Ascending aorta (tissue), 2 donors: ENCODE measurements at regions of chr11 and their contacts with region 1.

Region 1: GRCh38 chr11:65506770-65507505 is 8.1 kb downstream of the MALAT1 start:
- DNase-seq: peak in 1 of 2 donors; percentile 78
- H3K4me3 ChIP-seq: peak overlapping the region; percentile 62 to 67
- H3K27ac ChIP-seq: peak overlapping the region; percentile 81 to 95
- H3K4me1 ChIP-seq: peaks cover 6 to 19% of the 10 kb centered on the region in 2 donors
- H3K27me3 ChIP-seq: no peaks in the 10 kb centered on the region
- CTCF ChIP-seq: no peak

Region 2: GRCh38 chr11:65366340-65366773 is 140.6 kb before region 1 on chr11:
- intact Hi-C with region 1: loop called (anchors 2 kb)
- DNase-seq: no peak
- H3K4me3 ChIP-seq: no peak overlapping the region
- H3K27ac ChIP-seq: no peak overlapping the region
- H3K4me1 ChIP-seq: peaks cover 0 to 7% of the 10 kb centered on the region in 2 donors
- H3K27me3 ChIP-seq: no peaks in the 10 kb centered on the region
- CTCF ChIP-seq: peak; percentile 76 to 86 (median 82)

Region 3: DNA sequence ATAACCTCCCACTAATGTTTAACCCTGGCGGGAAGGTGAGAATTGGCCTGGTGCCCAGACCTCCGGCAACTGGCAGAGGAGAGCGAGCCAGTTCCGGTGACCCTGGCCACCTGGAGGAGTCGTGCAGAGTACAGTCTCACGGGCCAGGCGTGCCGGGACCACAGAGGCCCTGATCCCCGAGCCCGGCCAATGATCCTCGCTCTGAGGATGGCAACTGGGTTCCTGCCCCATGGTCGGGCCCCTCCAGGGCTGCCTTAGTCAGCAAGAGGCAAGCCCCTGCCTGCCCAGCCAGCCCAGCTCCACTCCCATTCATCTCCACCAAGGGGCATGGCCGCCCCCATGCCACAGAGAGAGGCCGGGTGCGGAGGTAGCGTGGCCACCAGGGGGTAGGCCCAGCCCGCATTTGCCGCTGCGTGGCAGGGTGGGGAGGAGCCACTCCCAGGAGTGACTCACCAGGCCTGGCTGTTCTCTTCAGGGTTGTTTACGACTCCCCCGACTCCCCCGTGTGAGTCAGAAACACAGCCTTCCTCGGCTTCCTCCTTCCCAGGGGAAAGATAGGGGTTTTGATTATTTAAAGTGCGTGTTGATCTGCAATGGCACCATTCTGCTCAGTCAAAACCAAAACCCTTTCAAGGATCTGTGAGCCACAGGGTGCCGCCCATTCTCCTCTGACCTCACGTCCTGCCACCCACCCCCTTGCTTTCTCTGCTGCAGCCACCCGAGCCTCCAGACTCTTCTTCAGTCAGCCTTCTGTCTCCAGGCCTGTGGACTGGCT is 124.7 kb before region 1 on chr11 and contains the start of gene SLC25A45:
- intact Hi-C with region 1: loop called (anchors 1 kb)
- DNase-seq: peak; percentile 91 to 98
- H3K4me3 ChIP-seq: peak within 1 kb of the TSS; percentile 31 to 63
- H3K27ac ChIP-seq: peak within 1 kb of the TSS; percentile 95 to 97
- H3K4me1 ChIP-seq: peaks cover 10 to 34% of the 10 kb centered on the region in 2 donors
- H3K27me3 ChIP-seq: no peaks in the 10 kb centered on the region
- CTCF ChIP-seq: peak; percentile 80 to 98 (median 88)
- total RNA-seq, gene SLC25A45: 11.4 TPM

Region 4: DNA sequence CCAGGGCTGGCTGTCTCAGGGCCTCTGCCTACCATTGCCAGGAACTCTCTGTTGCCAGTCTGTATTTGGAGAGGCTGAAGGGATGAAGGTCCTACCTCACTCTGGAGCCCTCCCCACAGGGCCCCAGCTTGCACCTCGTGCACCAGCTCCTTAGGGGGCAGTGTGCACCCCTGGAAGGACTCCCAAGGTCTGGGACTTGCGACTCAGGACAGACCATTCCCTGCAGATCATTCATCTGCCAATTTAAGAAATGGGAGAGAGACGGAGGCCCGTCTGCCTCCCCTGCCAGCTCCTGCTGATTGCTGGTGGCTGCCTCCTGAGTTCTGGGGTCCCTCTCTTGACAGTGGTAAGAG is 35.6 kb before region 1 on chr11:
- intact Hi-C with region 1: loop called (anchors 5 kb)
- DNase-seq: peak; percentile 57 to 93
- H3K4me3 ChIP-seq: peak overlapping the region; percentile 41 to 54
- H3K27ac ChIP-seq: peak overlapping the region; percentile 97 to 98
- H3K4me1 ChIP-seq: peaks cover 19 to 35% of the 10 kb centered on the region in 2 donors
- H3K27me3 ChIP-seq: no peaks in the 10 kb centered on the region
- CTCF ChIP-seq: peak; percentile 63 to 67 (median 64)